Ovary (tissue), 10 donors: ENCODE measurements at regions of chr5 and their contacts with region 1.

Region 1: DNA sequence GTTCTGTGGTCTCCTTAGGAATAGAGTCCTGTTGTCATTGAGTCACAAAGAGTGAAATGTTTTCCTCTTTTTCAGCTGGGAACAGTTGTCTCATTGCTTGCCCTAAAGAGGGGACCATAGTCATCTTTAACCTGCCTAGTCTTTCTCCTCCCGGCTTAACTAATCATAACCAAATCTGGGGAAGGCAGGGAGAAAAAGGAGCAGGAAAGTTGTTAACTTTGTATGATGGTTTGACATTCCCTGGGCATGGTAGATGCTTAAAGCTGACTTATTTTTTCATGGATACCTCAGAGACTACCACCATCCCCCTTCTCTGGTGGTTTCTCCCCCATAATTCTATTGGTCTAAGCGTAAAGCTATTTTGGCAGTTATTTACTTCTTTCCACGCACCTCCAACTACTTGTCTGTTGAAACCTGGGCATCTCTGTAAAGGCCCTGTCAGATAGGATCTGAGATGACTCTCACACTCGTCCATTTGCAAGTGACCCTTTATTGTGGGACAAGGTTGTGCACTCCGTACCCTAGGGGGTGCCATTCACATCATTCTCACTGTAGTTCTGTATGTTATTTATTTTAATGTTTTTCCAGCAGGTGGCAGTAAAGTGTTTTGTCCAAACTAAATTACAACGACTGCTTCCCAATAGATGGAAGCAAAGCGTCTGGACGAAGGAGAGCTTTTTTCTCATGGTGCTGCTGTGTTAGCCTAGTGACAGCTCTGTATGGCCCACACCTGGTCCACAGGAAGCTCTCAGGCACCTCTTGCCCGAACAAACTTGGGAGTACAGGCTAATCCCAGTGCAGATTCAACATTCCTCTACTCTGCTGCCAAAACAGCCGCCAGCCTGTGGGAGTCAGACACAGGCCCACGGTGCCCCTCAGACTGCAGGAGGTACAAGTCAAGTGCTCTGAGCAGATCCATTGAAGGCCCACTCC is 3.0 kb upstream of the FAM13B start:
- DNase-seq: peak; percentile 32 to 62 (median 48)
- H3K4me3 ChIP-seq: no peak overlapping the region
- H3K27ac ChIP-seq: peak overlapping the region in 1 of 2 donors; percentile 50
- H3K4me1 ChIP-seq: peaks cover 11% of the 10 kb centered on the region
- H3K27me3 ChIP-seq: no peaks in the 10 kb centered on the region
- CTCF ChIP-seq: peak; percentile 35 to 92 (median 89)
- EP300 ChIP-seq: no peak
- POLR2A ChIP-seq: no peak

Region 2: DNA sequence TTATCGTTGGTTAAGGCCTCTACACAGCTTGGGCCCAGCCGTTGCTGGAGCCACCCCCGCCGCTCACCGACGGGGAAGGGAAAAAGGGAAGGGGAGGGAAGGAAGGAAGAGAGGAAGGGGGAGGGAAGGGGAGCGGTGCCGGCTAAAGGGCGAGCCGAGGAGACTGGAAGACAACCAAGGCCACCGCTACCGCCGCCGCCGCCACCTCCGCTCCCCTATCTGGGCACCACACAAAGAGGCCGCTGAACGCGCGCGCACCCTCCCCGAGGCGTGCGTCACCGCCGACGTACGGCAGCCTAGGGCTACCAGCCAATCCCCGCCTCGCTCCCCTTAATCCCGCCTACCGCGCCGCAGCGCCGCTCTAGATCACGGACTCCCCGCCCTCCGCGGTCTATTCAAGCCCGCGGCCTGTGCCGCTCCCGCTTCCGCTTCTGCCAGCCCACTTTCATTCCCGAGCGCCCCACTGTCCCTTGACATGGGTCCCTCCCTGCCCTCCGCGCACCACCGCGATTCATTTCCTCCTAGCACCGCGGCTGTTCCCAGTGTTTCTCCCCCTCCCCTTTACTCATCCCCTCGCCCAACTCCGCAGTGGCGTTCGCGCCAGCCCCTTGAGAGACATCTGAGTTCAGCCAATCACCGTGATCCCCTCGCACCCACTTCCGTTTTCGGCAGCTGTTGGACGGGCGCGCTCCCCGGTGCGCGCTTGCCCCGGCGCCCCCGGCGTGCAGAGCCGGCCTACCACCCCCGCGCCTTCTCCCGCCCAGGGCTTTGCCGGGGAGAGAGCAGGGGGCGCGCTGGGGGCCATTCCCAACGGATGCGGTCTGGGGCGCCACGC is 281.5 kb before region 1 on chr5 and contains the start of gene HNRNPA0:
- intact Hi-C with region 1: loop called in 2 of 4 experiments (anchors 10 kb)
- DNase-seq: peak; percentile 96 to 98 (median 97)
- H3K4me3 ChIP-seq: peak within 1 kb of the TSS; percentile 91
- H3K27ac ChIP-seq: peak within 1 kb of the TSS; percentile 97
- H3K4me1 ChIP-seq: no peaks in the 10 kb centered on the region
- H3K27me3 ChIP-seq: no peaks in the 10 kb centered on the region
- CTCF ChIP-seq: peak; percentile 6 to 26 (median 25)
- EP300 ChIP-seq: peak; percentile 8
- POLR2A ChIP-seq: peak; percentile 98
- total RNA-seq, gene HNRNPA0: 16.9 to 52.9 (median 48.3) TPM

Region 3: DNA sequence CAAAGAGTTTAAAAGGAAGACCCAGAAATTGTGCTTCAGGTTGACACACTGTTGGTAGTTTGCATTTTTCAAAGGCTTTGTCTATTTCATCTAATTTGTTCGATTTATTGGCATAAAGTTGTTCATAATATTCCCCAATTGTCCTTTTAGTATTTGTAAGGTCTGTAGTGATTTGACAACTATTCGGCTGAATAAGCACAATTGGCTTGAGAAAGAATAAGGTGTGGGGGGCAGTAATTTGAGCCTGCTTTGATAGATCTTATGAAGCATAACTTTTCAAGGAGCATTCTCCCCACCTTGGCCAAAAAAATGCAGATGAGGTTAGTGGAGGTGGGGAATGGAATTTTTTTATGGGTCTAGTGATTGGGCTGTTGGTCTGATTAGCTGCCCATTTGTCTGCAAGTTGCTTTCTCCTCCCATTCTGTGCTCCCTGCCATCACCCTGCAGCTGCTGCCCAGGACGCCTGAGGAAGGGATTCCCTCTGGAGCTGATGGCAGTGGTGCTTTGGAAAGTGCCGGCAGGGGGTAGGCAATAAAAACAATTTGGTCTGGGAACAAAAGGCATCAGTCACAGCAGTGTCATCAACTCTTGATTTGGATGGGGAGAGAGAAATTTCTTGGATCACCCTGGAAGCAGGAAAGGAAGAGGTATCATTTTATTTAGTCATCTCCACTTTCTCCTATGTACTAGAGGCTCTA is 74.5 kb after region 1 on chr5:
- intact Hi-C with region 1: loop called in 1 of 4 experiments (anchors 1 kb)
- DNase-seq: no peak
- H3K4me3 ChIP-seq: no peak overlapping the region
- H3K27ac ChIP-seq: no peak overlapping the region
- H3K4me1 ChIP-seq: no peaks in the 10 kb centered on the region
- H3K27me3 ChIP-seq: no peaks in the 10 kb centered on the region
- CTCF ChIP-seq: no peak
- EP300 ChIP-seq: no peak
- POLR2A ChIP-seq: no peak